ENCODE measurements at regions of chr2 and their contacts with region 1.

Region 1: GRCh38 chr2:136362676-136363390 is 244.9 kb upstream of the CXCR4 start:
- DNase-seq: peak; percentile 67
- H3K4me3 Mint-ChIP-seq: peak overlapping the region; percentile 25
- H3K27ac Mint-ChIP-seq: peak overlapping the region; percentile 53
- H3K4me1 Mint-ChIP-seq: peaks cover 56% of the 10 kb centered on the region
- H3K27me3 Mint-ChIP-seq: peaks cover 5% of the 10 kb centered on the region

Region 2: GRCh38 chr2:136052369-136053362 is 310.2 kb before region 1 on chr2:
- CTCF ChIA-PET with region 1: no interaction called
- POLR2A ChIA-PET with region 1: interaction called, 6 read pairs
- intact Hi-C with region 1: loop called (anchors 5 kb)
- DNase-seq: peak; percentile 35
- H3K4me3 Mint-ChIP-seq: peak overlapping the region; percentile 57
- H3K27ac Mint-ChIP-seq: peak overlapping the region; percentile 99
- H3K4me1 Mint-ChIP-seq: peaks cover 86% of the 10 kb centered on the region
- H3K27me3 Mint-ChIP-seq: no peaks in the 10 kb centered on the region

Region 3: DNA sequence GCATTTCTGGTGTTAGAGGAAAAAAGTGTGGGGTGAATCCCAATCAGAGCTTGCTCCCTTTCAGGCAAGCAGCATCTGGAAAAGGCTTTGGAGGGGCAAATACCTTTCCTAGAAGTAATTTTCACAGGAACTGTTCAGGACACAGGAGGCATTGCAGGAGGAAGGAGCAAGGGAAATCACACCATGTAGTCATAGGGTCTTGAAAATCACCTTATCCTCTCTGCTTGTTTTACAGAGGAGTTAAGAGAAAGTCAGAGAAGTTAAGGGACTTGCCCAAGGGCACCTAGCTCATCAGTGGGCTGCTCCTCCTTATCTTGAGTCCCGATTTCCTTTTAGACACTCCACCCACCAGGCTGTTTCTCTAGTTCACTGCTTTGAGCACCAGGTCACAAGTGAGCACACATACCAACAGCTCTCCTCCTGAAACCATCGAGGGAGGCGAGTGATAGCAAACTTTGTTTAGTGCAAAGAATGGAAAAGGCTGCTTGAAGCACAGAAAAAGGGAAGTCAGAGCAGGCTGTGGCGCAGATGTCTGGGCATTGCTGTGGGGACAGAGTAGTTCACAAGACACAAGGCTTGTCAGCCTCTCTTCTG is 155.7 kb before region 1 on chr2:
- CTCF ChIA-PET with region 1: no interaction called
- POLR2A ChIA-PET with region 1: no interaction called
- intact Hi-C with region 1: loop called (anchors 2 kb)
- DNase-seq: peak; percentile 65
- H3K4me3 Mint-ChIP-seq: peak overlapping the region; percentile 3
- H3K27ac Mint-ChIP-seq: peak overlapping the region; percentile 96
- H3K4me1 Mint-ChIP-seq: peaks cover 46% of the 10 kb centered on the region
- H3K27me3 Mint-ChIP-seq: no peaks in the 10 kb centered on the region

Region 4: DNA sequence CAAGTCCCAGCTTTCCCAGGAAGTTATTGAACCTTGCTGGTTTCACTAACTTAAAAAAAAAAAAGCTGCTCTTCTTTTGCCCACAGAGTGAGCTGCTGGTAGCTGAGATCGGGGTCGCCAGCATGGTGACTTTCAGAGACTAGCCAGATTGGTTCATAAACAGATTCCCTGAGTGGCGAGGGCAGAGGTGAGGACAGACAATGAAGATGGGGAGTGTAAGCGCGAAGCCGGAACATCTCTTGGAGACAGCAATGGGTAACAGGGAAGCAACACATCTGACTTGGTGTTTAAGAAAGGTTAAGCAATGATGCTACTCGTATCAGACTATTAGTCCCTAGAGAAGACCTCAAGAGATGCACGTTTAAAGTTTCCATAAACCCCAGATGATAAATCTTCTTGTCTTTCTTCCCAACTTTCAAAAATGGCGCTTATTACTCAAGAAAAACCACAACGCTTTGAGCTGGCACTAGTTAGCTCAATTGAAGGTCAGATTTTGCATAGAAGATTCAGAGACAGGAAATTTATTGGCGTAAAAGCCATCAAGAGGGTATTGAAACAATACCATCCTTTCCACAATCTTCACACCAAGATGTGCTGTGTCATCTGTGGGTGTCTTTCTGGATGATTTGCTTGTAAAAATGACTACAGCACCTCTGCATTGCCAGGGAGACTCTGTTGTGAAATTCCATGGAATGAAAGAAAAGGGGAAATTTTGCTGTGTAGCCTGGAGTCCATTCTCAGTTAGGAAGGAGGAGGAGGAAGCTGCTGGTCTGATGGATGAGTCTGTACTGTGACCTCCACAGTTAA is 51.8 kb before region 1 on chr2:
- CTCF ChIA-PET with region 1: interaction called, 3 read pairs
- POLR2A ChIA-PET with region 1: interaction called, 6 read pairs
- intact Hi-C with region 1: loop called (anchors 1 kb)
- DNase-seq: peak; percentile 51
- H3K4me3 Mint-ChIP-seq: no peak overlapping the region
- H3K27ac Mint-ChIP-seq: peak overlapping the region; percentile 92
- H3K4me1 Mint-ChIP-seq: peaks cover 34% of the 10 kb centered on the region
- H3K27me3 Mint-ChIP-seq: no peaks in the 10 kb centered on the region

Region 5: GRCh38 chr2:136378712-136379595 is 16.1 kb after region 1 on chr2:
- CTCF ChIA-PET with region 1: interaction called, 6 read pairs
- POLR2A ChIA-PET with region 1: interaction called, 10 read pairs
- intact Hi-C with region 1: loop called (anchors 1 kb)
- DNase-seq: peak; percentile 88
- H3K4me3 Mint-ChIP-seq: no peak overlapping the region
- H3K27ac Mint-ChIP-seq: peak overlapping the region; percentile 44
- H3K4me1 Mint-ChIP-seq: peaks cover 87% of the 10 kb centered on the region
- H3K27me3 Mint-ChIP-seq: no peaks in the 10 kb centered on the region

Region 6: DNA sequence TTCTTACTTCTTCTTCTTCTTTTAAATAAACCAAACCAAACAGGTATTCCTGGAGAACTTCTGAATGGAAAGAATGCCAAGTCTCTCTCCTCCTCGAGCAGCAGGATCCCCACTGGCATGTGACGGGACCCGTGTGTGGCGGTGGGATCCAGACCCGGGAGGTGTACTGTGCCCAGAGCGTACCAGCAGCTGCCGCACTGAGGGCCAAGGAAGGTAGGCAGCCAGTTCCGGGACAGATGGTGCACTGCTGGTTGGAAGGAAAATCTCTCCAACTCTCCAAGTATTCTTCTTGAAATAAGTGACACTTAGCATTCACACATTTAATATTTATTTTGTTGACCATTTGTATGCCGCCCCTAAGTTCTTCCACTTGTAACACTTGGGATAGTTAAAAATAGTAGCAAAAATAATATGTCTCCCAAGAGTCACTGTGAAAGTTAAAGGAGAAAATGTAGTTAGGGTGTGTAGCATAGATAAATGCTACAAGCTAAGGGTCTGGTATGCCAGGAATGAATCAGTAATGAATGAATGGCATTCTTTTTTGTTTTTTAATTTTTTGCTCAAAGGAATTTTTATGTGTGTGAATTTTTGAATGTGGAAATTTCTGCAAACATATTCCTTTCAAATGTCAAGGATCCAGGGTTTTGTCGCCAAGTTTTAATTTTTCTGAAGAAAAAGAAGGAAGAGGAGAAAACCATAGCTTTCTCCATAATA is 752.4 kb after region 1 on chr2:
- CTCF ChIA-PET with region 1: no interaction called
- POLR2A ChIA-PET with region 1: no interaction called
- intact Hi-C with region 1: no loop called
- DNase-seq: no peak
- H3K4me3 Mint-ChIP-seq: no peak overlapping the region
- H3K27ac Mint-ChIP-seq: no peak overlapping the region
- H3K4me1 Mint-ChIP-seq: no peaks in the 10 kb centered on the region
- H3K27me3 Mint-ChIP-seq: no peaks in the 10 kb centered on the region

Measured in activated CD4-positive, alpha-beta memory T cell treated with anti-CD3 and anti-CD28 coated beads for 36 hours (primary cell).